ENCODE measurements at regions of chr12 and their contacts with region 1.

Region 1: GRCh38 chr12:75526655-75527511 is 15.5 kb upstream of the KRR1 start:
- DNase-seq: peak; percentile 39 to 66 (median 58)
- H3K4me3 ChIP-seq: no peak overlapping the region
- H3K27ac ChIP-seq: no peak overlapping the region
- H3K4me1 ChIP-seq: no peaks in the 10 kb centered on the region
- H3K27me3 ChIP-seq: peaks cover 0 to 3% (median 0%) of the 10 kb centered on the region in 5 experiments

Region 2: GRCh38 chr12:75511116-75512048 is 15.5 kb before region 1 on chr12 and contains the start of gene KRR1:
- CTCF ChIA-PET with region 1: interaction called, 10 read pairs
- POLR2A ChIA-PET with region 1: no interaction called
- DNase-seq: peak; percentile 98 to 99 (median 99)
- H3K4me3 ChIP-seq: peak within 1 kb of the TSS; percentile 62 to 99 (median 96)
- H3K27ac ChIP-seq: peak within 1 kb of the TSS; percentile 96 to 97
- H3K4me1 ChIP-seq: peaks cover 10 to 18% (median 11%) of the 10 kb centered on the region in 4 experiments
- H3K27me3 ChIP-seq: no peaks in the 10 kb centered on the region

Region 3: GRCh38 chr12:76031537-76032073 is 504.7 kb after region 1 on chr12 and contains the start of gene PHLDA1:
- CTCF ChIA-PET with region 1: interaction called, 74 read pairs
- POLR2A ChIA-PET with region 1: no interaction called
- DNase-seq: peak; percentile 81 to 91 (median 90)
- H3K4me3 ChIP-seq: peak within 1 kb of the TSS; percentile 51 to 83 (median 77)
- H3K27ac ChIP-seq: peak within 1 kb of the TSS in 1 of 2 experiments; percentile 64
- H3K4me1 ChIP-seq: peaks cover 0 to 33% (median 30%) of the 10 kb centered on the region in 4 experiments
- H3K27me3 ChIP-seq: peaks cover 28 to 74% (median 34%) of the 10 kb centered on the region in 5 experiments

Region 4: DNA sequence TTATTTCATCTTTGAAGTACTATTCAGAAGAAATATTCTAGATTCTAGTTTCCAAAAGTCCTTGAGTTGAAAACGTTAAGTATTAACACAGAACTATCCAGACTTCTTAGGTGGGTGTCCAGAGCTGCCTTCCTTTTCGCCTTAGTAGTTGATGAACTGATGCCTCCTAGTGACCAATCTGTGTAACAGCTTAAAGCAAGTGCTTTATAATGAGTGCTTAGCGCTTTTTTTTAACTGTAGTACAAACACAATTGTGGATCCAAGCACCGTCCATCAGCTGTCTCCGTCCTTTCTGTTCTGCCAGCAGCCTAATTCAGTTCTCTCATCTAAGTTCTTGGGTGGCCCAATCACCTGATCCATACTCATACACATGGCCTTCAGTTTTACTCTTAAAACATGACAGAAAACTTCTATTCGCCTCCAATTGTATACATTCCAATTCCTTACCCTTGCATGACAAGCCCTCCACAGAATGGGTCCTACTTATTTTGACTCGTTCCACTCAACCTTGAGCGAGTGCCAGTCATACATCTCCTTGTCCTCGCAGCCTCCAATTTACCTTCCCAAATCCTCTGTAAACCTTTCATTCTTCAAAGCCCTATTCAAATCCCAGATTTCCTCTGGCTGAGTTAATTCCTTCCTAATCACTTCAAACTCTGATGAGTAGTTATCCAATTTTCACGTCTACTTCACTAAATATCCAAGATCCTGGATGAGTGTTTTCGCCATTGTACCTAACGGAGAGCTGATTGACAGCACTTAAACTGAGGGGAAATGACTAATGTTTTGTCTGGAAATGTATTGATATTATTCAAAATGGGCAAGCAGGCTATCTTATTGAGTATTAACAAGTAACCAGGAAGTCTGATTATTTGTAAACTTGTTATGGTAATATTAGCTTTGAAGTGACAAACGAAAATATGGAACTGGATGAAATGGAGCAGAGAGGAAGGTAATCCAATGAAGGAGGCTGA is 510.5 kb after region 1 on chr12:
- CTCF ChIA-PET with region 1: interaction called, 74 read pairs
- POLR2A ChIA-PET with region 1: no interaction called
- DNase-seq: peak; percentile 81 to 90 (median 88)
- H3K4me3 ChIP-seq: no peak overlapping the region
- H3K27ac ChIP-seq: no peak overlapping the region
- H3K4me1 ChIP-seq: peaks cover 0 to 9% (median 5%) of the 10 kb centered on the region in 4 experiments
- H3K27me3 ChIP-seq: peaks cover 5 to 18% (median 8%) of the 10 kb centered on the region in 5 experiments

Region 5: GRCh38 chr12:76348079-76348901 is 821.4 kb after region 1 on chr12 and contains the start of gene BBS10:
- CTCF ChIA-PET with region 1: interaction called, 15 read pairs
- POLR2A ChIA-PET with region 1: no interaction called
- DNase-seq: peak; percentile 93 to 97 (median 97)
- H3K4me3 ChIP-seq: peak within 1 kb of the TSS; percentile 78 to 96 (median 93)
- H3K27ac ChIP-seq: peak within 1 kb of the TSS; percentile 52 to 82
- H3K4me1 ChIP-seq: peaks cover 6 to 18% (median 12%) of the 10 kb centered on the region in 4 experiments
- H3K27me3 ChIP-seq: no peaks in the 10 kb centered on the region

Region 6: DNA sequence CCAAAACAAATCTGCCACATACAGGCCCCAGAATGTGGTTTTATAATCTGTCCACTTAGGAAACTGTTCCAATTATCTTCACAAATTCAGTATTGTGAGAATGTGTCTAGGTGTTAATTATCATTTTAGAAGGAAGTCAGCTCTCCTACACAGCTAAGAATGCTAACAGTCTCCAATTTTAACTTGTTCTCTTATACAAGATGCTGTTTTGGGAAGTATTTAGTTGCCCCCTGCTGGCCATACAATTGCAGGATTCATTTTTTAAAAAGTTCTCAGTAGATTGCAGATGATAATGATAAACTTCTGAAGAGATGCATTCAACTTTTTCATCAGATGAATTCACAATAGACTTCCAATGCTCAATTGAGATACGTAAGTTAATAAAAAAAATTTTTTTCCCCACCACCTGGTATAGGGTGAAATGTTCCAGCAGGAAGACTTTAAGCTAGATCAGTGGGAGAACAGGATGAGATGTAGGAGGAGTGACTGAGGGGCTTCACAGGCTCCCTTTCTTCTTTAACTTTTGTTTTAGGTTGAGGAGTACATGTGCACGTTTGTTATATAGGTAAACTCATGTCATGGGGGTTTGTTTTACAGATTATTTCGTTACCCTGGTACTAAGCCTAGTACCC is 1060.0 kb after region 1 on chr12:
- CTCF ChIA-PET with region 1: interaction called, 18 read pairs
- POLR2A ChIA-PET with region 1: no interaction called
- DNase-seq: peak; percentile 66 to 82 (median 76)
- H3K4me3 ChIP-seq: no peak overlapping the region
- H3K27ac ChIP-seq: no peak overlapping the region
- H3K4me1 ChIP-seq: peaks cover 0 to 13% (median 0%) of the 10 kb centered on the region in 4 experiments
- H3K27me3 ChIP-seq: no peaks in the 10 kb centered on the region

Measured in common myeloid progenitor, CD34-positive (primary cell).